SK-N-SH (cell line): ENCODE measurements at regions of chr17 and their contacts with region 1.

Region 1: GRCh38 chr17:62052757-62053338 is 12.2 kb downstream of the MED13 start:
- DNase-seq: no peak
- H3K4me3 ChIP-seq: no peak overlapping the region
- H3K27ac ChIP-seq: no peak overlapping the region
- H3K4me1 ChIP-seq: peaks cover 2 to 3% of the 10 kb centered on the region in 2 experiments; a peak in 2 of 4 replicates
- H3K27me3 ChIP-seq: no peaks in the 10 kb centered on the region
- CTCF ChIP-seq: no peak
- EP300 ChIP-seq: no peak
- RAD21 ChIP-seq: no peak

Region 2: DNA sequence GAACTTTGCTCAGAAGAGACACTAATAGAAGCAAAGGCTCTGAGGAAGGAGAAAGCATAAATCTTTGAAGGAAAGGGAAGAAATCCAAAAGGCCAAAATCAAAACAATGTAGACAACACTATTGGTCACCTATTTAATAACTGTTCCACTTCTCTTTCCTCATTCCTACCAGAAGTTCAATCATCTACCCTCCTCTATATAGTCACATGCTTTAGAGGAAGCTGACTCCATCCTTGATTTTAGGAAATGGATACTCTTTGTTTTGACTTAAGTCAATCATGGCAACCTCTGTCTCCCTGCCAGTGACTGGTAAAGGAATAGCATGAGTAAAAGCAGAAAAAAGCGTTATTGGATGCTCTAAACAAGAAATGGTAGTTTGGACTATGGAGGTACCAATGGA is 196.8 kb before region 1 on chr17:
- CTCF ChIA-PET with region 1: no interaction called
- POLR2A ChIA-PET with region 1: no interaction called
- DNase-seq: no peak
- H3K4me3 ChIP-seq: no peak overlapping the region
- H3K27ac ChIP-seq: no peak overlapping the region
- H3K4me1 ChIP-seq: peaks cover 1 to 5% of the 10 kb centered on the region in 2 experiments; a peak in 3 of 4 replicates
- H3K27me3 ChIP-seq: no peaks in the 10 kb centered on the region
- CTCF ChIP-seq: no peak
- EP300 ChIP-seq: no peak
- RAD21 ChIP-seq: no peak

Region 3: DNA sequence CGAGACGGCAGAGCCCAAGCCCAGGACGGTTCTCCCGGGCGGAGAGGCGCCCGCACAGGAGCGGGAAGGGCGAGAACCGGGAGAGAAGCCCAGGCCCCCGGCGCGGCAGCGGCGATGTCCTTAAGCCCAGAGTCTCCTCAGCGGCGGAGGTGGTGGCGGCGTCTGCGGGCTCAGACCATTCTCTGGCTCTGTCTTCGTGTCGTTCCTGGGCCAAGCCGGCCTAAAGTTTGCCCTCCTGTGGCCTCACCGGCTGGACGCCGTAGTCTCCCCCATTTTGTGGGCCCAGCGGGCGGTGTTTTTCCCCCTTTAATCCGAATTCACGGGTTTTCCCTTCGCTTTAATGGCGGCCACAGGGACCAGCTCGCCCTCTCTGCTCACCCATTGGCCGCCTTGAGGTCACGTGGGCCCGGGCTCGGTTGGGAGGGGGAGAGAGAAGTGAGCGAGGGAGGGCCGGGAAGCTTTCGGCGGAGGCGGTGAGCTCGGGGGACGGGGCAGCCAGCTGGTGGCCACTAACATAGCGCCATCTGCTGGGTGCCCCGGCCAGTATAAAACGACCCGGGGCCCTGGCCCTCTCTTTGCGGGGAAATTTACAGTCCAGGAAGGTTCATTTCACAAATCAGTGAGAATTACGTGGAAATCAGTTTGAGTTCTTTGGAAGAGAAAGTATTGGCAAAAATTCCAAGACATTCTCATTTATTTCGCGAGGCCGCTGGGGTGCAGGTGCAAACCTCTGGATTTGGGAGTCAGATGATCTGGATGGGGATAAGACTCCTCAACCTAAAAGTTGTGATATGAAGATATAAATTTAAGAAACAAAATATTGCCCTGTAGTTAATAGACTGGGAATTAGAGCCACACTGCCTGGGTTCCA is 13.0 kb after region 1 on chr17:
- CTCF ChIA-PET with region 1: interaction called, 14 read pairs
- POLR2A ChIA-PET with region 1: interaction called, 5 read pairs
- DNase-seq: peak; percentile 100
- H3K4me3 ChIP-seq: peak overlapping the region; percentile 90 to 95
- H3K27ac ChIP-seq: peak overlapping the region; percentile 96 to 99
- H3K4me1 ChIP-seq: peaks cover 18 to 20% of the 10 kb centered on the region in 2 experiments; a peak in 3 of 4 replicates
- H3K27me3 ChIP-seq: no peaks in the 10 kb centered on the region
- CTCF ChIP-seq: peak; percentile 99
- EP300 ChIP-seq: no peak
- RAD21 ChIP-seq: peak; percentile 86

Region 4: DNA sequence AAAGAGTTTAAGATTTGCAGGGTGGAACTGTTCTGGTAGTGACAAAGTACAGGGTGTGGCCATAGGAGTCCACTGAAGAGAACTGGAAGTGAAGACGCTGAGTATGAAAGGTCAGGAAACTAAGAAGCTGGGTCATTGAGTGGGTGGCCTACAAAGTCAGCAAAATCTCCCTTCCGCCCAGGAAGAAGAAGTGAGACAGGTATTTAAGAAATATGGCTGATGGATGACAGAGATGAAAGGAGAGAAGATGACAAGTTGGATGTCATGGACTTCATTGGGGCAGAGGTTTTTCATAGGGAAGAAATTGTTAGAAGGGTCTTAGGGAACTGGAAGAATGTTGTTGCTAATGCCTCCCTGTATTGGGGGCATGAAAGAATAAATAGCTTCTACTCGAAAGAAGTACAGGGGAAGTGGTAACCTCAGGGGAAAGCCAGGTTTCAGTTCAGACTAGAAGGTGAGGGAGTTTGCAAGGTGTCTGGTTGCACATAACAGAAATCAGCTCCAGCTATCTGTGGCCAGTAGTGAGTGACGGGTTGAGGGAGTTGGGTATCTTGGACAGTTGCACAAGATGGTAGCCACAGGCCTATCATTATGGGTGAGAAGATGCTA is 45.9 kb after region 1 on chr17:
- CTCF ChIA-PET with region 1: no interaction called
- POLR2A ChIA-PET with region 1: no interaction called
- DNase-seq: no peak
- H3K4me3 ChIP-seq: no peak overlapping the region
- H3K27ac ChIP-seq: no peak overlapping the region
- H3K4me1 ChIP-seq: peaks cover 5 to 6% of the 10 kb centered on the region in 2 experiments; a peak in 3 of 4 replicates
- H3K27me3 ChIP-seq: no peaks in the 10 kb centered on the region
- CTCF ChIP-seq: no peak
- EP300 ChIP-seq: no peak
- RAD21 ChIP-seq: no peak

Region 5: DNA sequence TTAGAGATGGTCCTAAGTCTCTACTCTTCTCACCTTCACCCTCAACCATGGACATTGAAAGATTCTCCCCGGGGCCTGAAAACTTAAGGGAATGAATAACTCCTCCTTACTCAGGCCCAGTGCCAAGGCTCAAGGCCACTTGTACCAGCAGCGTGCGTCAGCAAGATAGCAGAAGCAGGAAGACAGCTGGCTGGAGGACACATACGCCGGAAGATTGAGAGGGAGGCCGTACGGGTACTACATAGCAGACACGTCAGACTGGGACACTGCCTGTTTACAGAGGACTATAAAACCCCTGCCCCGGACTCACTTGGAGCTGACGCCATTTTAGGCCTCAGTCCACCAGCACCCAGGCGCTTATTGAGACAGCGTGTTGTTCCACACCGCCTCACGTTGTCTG is 88.0 kb after region 1 on chr17:
- CTCF ChIA-PET with region 1: no interaction called
- POLR2A ChIA-PET with region 1: no interaction called
- DNase-seq: no peak
- H3K4me3 ChIP-seq: no peak overlapping the region
- H3K27ac ChIP-seq: no peak overlapping the region
- H3K4me1 ChIP-seq: peaks cover 0 to 11% of the 10 kb centered on the region in 2 experiments; a peak in 1 of 4 replicates
- H3K27me3 ChIP-seq: no peaks in the 10 kb centered on the region
- CTCF ChIP-seq: no peak
- EP300 ChIP-seq: no peak
- RAD21 ChIP-seq: no peak

Region 6: GRCh38 chr17:62154909-62155308 is 102.1 kb after region 1 on chr17:
- CTCF ChIA-PET with region 1: no interaction called
- POLR2A ChIA-PET with region 1: no interaction called
- DNase-seq: no peak
- H3K4me3 ChIP-seq: no peak overlapping the region
- H3K27ac ChIP-seq: no peak overlapping the region
- H3K4me1 ChIP-seq: no peaks in the 10 kb centered on the region
- H3K27me3 ChIP-seq: no peaks in the 10 kb centered on the region
- CTCF ChIP-seq: no peak
- EP300 ChIP-seq: no peak
- RAD21 ChIP-seq: no peak